CD4-positive, alpha-beta T cell (primary cell): ENCODE measurements at regions of chr3 and their contacts with region 1.

Region 1: GRCh38 chr3:141353652-141354495 is 14.4 kb upstream of the ZBTB38 start:
- DNase-seq: no peak
- ATAC-seq: no peak
- H3K4me3 ChIP-seq: no peak overlapping the region
- H3K4me3 Mint-ChIP-seq: no peak overlapping the region
- H3K27ac ChIP-seq: no peak overlapping the region
- H3K27ac Mint-ChIP-seq: no peak overlapping the region
- H3K4me1 ChIP-seq: no peaks in the 10 kb centered on the region
- H3K4me1 Mint-ChIP-seq: no peaks in the 10 kb centered on the region
- H3K27me3 ChIP-seq: no peaks in the 10 kb centered on the region
- H3K27me3 Mint-ChIP-seq: peaks cover 5% of the 10 kb centered on the region
- CTCF ChIP-seq: no peak

Region 2: GRCh38 chr3:140505213-140505612 is 848.7 kb before region 1 on chr3:
- CTCF ChIA-PET with region 1: no interaction called
- POLR2A ChIA-PET with region 1: no interaction called
- intact Hi-C with region 1: no loop called
- DNase-seq: no peak
- ATAC-seq: no peak
- H3K4me3 ChIP-seq: no peak overlapping the region
- H3K4me3 Mint-ChIP-seq: no peak overlapping the region
- H3K27ac ChIP-seq: no peak overlapping the region
- H3K27ac Mint-ChIP-seq: no peak overlapping the region
- H3K4me1 ChIP-seq: no peaks in the 10 kb centered on the region
- H3K4me1 Mint-ChIP-seq: no peaks in the 10 kb centered on the region
- H3K27me3 ChIP-seq: peaks cover 0 to 2% of the 10 kb centered on the region in 2 experiments
- H3K27me3 Mint-ChIP-seq: peaks cover 4% of the 10 kb centered on the region
- CTCF ChIP-seq: no peak

Region 3: DNA sequence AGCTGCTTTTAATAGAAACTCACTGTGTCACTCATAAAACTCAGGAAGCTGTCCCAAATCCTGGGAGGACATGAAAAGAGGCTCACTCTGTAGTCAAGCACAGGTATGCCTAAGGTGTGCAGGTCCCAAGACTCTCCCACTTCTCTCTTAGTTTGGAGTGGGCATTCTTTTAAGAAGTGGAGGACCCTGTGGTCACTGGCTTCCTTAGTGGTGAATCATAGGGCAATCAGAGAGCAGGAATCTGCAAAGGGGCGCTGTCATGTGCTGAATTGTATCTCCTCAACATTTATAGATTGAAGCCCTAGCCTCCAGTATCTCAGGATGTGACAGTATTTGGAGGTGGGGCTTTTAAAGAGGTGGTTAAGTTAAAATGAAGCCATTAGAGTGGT is 32.8 kb before region 1 on chr3:
- CTCF ChIA-PET with region 1: no interaction called
- POLR2A ChIA-PET with region 1: no interaction called
- intact Hi-C with region 1: loop called in 1 of 2 experiments (anchors 5 kb)
- DNase-seq: peak in 1 of 14 experiments; percentile 18
- ATAC-seq: peak; percentile 34
- H3K4me3 ChIP-seq: no peak overlapping the region
- H3K4me3 Mint-ChIP-seq: peak overlapping the region; percentile 66
- H3K27ac ChIP-seq: peak overlapping the region; percentile 14 to 50
- H3K27ac Mint-ChIP-seq: peak overlapping the region; percentile 75
- H3K4me1 ChIP-seq: peaks cover 16% of the 10 kb centered on the region
- H3K4me1 Mint-ChIP-seq: peaks cover 30% of the 10 kb centered on the region
- H3K27me3 ChIP-seq: no peaks in the 10 kb centered on the region
- H3K27me3 Mint-ChIP-seq: no peaks in the 10 kb centered on the region
- CTCF ChIP-seq: no peak

Region 4: DNA sequence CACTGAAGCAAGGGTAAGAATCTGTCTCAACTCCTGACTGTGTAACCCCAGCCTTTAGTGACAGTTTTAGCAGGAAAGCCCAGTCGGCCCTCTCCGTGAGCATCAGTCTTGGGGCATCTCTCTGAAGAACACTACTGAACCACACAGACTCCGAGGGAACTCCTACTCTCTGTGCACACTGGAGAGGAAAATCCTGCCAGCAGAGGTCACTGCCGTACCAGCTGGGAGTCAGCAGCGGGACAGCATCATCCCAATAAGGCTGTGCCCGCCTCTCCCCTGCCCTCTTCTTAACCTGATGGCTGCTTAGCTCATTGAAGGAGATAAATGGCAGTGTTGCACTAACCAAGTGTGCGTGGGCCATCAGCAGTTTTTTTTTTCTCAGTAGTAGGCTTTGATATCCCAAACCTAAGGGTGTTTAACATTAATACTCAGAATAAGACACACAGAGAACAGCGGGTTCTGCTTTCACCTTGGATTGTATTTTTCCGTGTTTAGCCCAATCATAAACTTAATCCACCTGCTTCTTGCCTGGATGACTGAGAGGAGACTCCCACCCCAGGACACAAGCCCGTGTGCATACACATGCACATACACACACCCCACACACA is 106.3 kb after region 1 on chr3:
- CTCF ChIA-PET with region 1: no interaction called
- POLR2A ChIA-PET with region 1: no interaction called
- intact Hi-C with region 1: no loop called
- DNase-seq: peak; percentile 83 to 93 (median 88)
- ATAC-seq: peak; percentile 100
- H3K4me3 ChIP-seq: no peak overlapping the region
- H3K4me3 Mint-ChIP-seq: no peak overlapping the region
- H3K27ac ChIP-seq: no peak overlapping the region
- H3K27ac Mint-ChIP-seq: no peak overlapping the region
- H3K4me1 ChIP-seq: peaks cover 7% of the 10 kb centered on the region
- H3K4me1 Mint-ChIP-seq: peaks cover 7% of the 10 kb centered on the region
- H3K27me3 ChIP-seq: no peaks in the 10 kb centered on the region
- H3K27me3 Mint-ChIP-seq: no peaks in the 10 kb centered on the region
- CTCF ChIP-seq: peak; percentile 93

Region 5: GRCh38 chr3:141644931-141645330 is 291.1 kb after region 1 on chr3:
- CTCF ChIA-PET with region 1: no interaction called
- POLR2A ChIA-PET with region 1: no interaction called
- intact Hi-C with region 1: loop called in 1 of 2 experiments (anchors 10 kb)
- DNase-seq: peak; percentile 36 to 75 (median 58)
- ATAC-seq: peak; percentile 59
- H3K4me3 ChIP-seq: no peak overlapping the region
- H3K4me3 Mint-ChIP-seq: no peak overlapping the region
- H3K27ac ChIP-seq: no peak overlapping the region
- H3K27ac Mint-ChIP-seq: no peak overlapping the region
- H3K4me1 ChIP-seq: peaks cover 3% of the 10 kb centered on the region
- H3K4me1 Mint-ChIP-seq: no peaks in the 10 kb centered on the region
- H3K27me3 ChIP-seq: no peaks in the 10 kb centered on the region
- H3K27me3 Mint-ChIP-seq: no peaks in the 10 kb centered on the region
- CTCF ChIP-seq: peak; percentile 76